ENCODE measurements at regions of chr1 and their contacts with region 1.

Region 1: DNA sequence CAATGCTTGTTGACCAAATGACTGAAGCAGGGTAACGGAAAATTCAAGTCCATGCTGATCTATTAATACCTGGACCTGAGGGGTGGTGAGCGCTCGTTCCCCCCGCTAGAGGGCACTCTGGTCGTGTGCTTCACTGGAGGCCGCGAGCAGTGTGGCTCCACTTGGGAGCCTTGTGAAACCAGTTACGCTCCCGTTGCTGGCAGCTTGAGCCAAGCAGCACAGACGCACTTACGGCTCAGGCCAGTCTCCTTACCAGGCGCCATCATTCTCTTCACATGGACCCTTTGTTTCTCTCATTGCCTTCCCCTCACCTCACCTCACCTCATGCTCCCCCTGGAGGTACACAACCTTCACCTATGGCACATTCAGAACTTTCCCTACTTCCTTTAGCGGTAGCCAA is 49.7 kb upstream of the TSPAN2 start:
- DNase-seq: peak; percentile 83
- H3K4me3 ChIP-seq: no peak overlapping the region
- H3K27ac ChIP-seq: no peak overlapping the region
- H3K4me1 ChIP-seq: peaks cover 28% of the 10 kb centered on the region
- H3K27me3 ChIP-seq: no peaks in the 10 kb centered on the region
- CTCF ChIP-seq: peak; percentile 93 to 96

Region 2: DNA sequence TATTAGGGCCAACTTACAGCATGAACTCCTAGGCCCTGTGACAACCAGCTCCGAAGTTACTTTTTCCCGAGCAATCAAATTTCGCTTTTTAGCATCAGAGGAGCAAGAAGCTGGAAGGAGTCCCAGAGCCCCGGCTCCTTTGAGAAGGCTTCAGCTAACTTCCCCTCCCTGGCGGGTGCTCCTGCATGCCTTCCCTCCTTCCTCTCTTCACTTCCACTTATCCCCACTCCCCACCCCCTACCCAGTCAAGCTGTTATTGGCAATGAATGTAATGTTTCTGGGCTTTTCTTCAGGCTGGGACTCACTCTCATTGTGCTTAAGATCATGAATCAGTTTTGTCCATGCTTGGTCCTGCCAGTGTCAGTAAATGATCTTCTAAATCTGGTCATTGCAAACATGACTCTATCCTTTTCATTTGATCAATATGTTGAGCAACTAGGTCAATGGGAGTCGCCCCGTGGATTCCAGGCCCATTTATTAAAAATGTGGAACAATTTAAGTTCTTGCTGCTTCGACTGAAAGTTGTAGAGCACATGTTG is 44.8 kb after region 1 on chr1:
- CTCF ChIA-PET with region 1: no interaction called
- dilution Hi-C with region 1: no loop called
- in situ Hi-C with region 1: no loop called
- intact Hi-C with region 1: loop called (anchors 1 kb)
- DNase-seq: no peak
- H3K4me3 ChIP-seq: no peak overlapping the region
- H3K27ac ChIP-seq: no peak overlapping the region
- H3K4me1 ChIP-seq: peaks cover 17% of the 10 kb centered on the region
- H3K27me3 ChIP-seq: no peaks in the 10 kb centered on the region
- CTCF ChIP-seq: no peak

Region 3: GRCh38 chr1:115258302-115258866 is 119.4 kb after region 1 on chr1:
- CTCF ChIA-PET with region 1: no interaction called
- dilution Hi-C with region 1: no loop called
- in situ Hi-C with region 1: no loop called
- intact Hi-C with region 1: loop called (anchors 5 kb)
- DNase-seq: peak; percentile 73
- H3K4me3 ChIP-seq: no peak overlapping the region
- H3K27ac ChIP-seq: no peak overlapping the region
- H3K4me1 ChIP-seq: no peaks in the 10 kb centered on the region
- H3K27me3 ChIP-seq: no peaks in the 10 kb centered on the region
- CTCF ChIP-seq: no peak

Region 4: GRCh38 chr1:115330480-115331013 is 191.6 kb after region 1 on chr1:
- CTCF ChIA-PET with region 1: no interaction called
- dilution Hi-C with region 1: no loop called
- in situ Hi-C with region 1: no loop called
- intact Hi-C with region 1: loop called (anchors 2 kb)
- DNase-seq: peak; percentile 62
- H3K4me3 ChIP-seq: no peak overlapping the region
- H3K27ac ChIP-seq: no peak overlapping the region
- H3K4me1 ChIP-seq: no peaks in the 10 kb centered on the region
- H3K27me3 ChIP-seq: no peaks in the 10 kb centered on the region
- CTCF ChIP-seq: peak in 1 of 2 donors; percentile 24

Region 5: DNA sequence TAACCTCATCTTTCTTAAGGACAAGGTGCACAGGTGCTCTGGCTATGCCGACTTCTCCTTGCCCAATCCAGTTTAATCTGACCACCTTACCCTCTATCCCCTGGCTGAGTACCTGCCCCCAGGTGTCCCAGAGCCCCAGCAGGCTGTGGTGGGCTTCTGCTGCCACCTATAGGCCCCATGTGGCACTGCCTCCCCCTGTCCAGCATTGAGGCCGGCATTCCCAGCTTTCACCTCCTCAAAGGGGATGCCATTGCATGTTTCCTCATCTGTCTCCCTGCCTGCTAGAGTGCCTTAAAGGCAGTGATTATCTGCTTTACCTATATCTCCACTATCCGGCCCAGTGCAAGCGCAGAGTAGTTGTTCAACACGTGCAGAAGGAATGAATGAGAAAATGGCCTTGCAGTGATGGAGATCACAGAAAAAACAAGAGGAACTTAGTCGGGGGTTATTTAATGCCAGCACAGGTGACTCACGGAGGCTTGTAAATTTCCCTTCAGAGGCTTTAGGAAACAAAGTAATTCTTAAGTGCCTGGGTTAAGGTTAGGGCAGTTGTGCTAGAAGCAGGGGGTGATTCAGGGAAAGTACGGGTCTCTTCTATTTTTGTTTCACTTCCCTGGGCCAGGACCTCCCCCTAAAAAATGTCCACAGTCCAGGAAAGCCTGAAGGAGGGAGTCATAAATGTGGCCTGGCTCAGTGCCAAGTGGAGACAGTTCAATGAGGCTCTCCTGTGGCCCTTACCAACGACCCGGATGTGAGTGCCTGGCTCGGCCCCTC is 330.9 kb after region 1 on chr1:
- CTCF ChIA-PET with region 1: interaction called, 7 read pairs
- dilution Hi-C with region 1: loop called (anchors 25 kb)
- in situ Hi-C with region 1: no loop called
- intact Hi-C with region 1: loop called (anchors 1 kb)
- DNase-seq: peak; percentile 74
- H3K4me3 ChIP-seq: no peak overlapping the region
- H3K27ac ChIP-seq: peak overlapping the region; percentile 31
- H3K4me1 ChIP-seq: peaks cover 28% of the 10 kb centered on the region
- H3K27me3 ChIP-seq: no peaks in the 10 kb centered on the region
- CTCF ChIP-seq: peak; percentile 93 to 98

Region 6: DNA sequence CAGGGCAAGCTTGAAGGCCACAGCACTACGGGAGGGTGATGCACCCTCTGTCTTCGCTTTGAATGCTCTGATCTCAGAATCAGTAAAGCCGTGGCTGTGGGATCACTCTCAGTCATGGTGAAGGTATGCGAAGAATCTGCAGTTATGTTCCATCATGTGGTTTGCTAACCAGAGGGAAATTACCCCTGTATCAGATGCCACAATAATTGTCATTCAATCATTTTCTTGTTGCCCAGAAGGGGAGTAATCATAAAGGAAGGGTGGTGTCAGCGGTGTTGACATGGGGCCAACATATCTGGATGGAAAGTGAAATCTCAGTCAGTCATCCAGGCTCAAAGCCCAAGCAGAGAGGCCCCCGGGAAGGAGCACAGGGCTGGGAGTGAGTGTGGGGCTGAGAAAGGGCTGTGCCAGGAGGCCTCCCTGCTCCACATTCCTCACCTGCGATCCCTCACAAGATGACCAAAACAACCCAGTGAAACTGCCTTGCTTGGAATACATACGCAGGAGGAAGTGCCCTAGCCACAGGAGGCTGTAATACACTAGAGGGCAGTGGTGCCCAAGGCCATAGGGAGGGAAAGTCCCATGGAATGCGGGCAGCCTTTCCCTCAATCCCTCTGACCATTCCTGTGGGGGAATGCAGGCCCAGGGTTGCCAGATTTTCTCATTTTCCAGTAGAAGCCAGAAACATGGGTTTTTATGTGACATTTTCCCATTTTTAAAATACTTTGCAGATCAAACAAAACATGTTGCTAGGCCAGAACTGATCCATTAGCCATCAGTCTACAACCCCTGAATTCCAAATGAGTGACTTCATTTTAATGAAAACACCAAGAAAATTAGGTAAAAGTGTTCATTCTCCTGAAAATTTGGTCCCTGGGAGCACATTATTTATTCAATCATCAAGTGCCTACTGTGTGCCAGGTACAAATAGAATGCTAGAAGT is 407.1 kb after region 1 on chr1:
- CTCF ChIA-PET with region 1: no interaction called
- dilution Hi-C with region 1: loop called (anchors 5 kb)
- in situ Hi-C with region 1: no loop called
- intact Hi-C with region 1: loop called (anchors 1 kb)
- DNase-seq: peak; percentile 97
- H3K4me3 ChIP-seq: no peak overlapping the region
- H3K27ac ChIP-seq: peak overlapping the region; percentile 75
- H3K4me1 ChIP-seq: peaks cover 22% of the 10 kb centered on the region
- H3K27me3 ChIP-seq: no peaks in the 10 kb centered on the region
- CTCF ChIP-seq: peak; percentile 81 to 84

Region 7: DNA sequence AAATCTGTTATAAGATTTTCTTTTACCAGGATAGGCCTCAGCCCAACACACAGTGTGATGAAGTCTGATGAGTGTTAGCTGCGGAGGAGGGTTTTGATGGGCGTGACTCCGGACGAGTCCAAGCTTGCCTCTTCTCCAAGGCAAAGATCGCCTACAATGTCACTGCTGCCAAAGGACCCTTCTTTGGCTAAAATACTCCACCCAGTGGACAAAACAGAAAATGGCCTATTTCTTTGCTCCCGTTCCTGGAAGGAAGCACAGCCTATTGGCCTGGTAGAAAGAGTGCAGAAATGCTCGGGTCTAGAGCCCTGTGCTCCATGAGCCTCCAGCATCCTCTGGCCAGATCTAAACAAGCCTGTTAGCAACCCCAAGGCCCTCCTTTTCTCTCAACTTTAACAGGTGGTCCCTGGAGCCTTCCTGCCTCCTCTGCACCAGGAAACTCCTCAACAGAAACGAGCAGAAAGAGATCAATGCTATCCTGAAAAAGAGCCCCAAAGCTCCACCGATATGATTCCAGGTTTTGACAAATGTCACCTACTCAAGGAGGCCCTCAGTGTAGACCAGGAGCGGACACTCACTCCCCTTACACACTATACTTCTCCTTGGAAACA is 633.0 kb after region 1 on chr1:
- CTCF ChIA-PET with region 1: no interaction called
- dilution Hi-C with region 1: no loop called
- in situ Hi-C with region 1: loop called in 1 of 2 experiments (anchors 10 kb)
- intact Hi-C with region 1: loop called (anchors 5 kb)
- DNase-seq: peak; percentile 94
- H3K4me3 ChIP-seq: no peak overlapping the region
- H3K27ac ChIP-seq: peak overlapping the region; percentile 86
- H3K4me1 ChIP-seq: peaks cover 6% of the 10 kb centered on the region
- H3K27me3 ChIP-seq: no peaks in the 10 kb centered on the region
- CTCF ChIP-seq: peak; percentile 80 to 87

Measured in mammary epithelial cell (primary cell).